ENCODE measurements at regions of chr7 and their contacts with region 1.

Region 1: DNA sequence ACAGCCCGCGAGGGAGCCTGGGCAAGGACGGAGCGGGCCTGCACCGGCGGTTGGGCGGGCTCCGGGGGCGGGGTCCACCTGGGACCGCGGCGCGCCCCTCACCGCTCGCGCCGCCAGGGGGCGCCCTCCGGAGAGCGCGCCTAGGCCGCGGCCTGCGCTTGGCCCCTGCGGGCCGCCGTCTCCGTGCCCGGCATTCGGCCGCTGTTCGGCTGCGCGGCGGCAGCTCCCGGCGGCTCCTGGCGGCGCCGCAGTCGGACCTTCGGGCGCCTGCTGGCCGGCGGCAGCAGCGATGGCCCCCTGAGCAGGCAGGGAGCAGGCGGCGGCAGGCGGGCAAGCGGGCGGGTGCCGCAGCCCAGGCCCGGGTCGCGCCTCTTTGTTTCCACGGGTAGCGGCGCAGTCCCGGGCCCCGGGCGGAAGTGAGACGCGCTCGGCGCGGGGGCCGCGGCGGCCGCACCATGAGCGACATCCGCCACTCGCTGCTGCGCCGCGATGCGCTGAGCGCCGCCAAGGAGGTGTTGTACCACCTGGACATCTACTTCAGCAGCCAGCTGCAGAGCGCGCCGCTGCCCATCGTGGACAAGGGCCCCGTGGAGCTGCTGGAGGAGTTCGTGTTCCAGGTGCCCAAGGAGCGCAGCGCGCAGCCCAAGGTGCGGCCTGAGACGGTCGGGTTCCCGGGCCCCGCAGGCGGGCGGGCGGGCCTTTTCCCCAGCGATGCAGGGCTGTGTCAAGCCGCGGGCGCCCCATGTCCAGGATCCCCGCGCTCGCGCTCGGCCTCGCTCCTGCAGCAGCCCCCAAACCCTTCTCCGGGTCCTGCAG is at the start of gene INTS15:
- DNase-seq: no peak
- H3K4me3 ChIP-seq: peak within 1 kb of the TSS; percentile 91
- H3K27me3 ChIP-seq: no peaks in the 10 kb centered on the region
- CTCF ChIP-seq: 0 out of 2 replicates have a peak, but pooled peaks have one; percentile 10
- polyA plus RNA-seq, gene INTS15: 16.0 and 22.6 TPM in 2 replicates

Region 2: DNA sequence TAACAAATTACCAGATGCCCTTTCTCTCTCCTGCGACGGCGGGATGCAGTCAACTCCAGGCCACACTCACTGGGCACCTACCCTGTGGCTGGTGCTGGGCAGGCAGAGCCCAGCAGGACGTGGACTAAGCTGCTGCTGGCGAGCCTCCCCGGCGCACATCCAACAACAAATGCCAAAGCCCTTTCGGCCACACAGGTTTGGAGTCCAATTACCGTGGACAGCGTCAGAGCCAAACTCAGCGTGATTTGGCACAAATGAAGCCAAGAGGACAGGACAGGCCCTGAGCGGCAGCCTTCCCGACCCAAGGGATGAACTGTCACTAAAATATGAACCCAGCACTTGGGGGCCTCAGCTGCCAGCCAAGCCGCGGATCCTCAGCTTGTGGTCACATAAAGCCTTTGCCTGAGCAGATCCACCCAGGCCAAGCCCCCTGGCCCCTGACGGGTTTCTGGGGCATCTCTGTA is 170.7 kb before region 1 on chr7:
- CTCF ChIA-PET with region 1: no interaction called
- POLR2A ChIA-PET with region 1: no interaction called
- DNase-seq: no peak
- H3K4me3 ChIP-seq: no peak overlapping the region
- H3K27me3 ChIP-seq: no peaks in the 10 kb centered on the region
- CTCF ChIP-seq: no peak

Region 3: DNA sequence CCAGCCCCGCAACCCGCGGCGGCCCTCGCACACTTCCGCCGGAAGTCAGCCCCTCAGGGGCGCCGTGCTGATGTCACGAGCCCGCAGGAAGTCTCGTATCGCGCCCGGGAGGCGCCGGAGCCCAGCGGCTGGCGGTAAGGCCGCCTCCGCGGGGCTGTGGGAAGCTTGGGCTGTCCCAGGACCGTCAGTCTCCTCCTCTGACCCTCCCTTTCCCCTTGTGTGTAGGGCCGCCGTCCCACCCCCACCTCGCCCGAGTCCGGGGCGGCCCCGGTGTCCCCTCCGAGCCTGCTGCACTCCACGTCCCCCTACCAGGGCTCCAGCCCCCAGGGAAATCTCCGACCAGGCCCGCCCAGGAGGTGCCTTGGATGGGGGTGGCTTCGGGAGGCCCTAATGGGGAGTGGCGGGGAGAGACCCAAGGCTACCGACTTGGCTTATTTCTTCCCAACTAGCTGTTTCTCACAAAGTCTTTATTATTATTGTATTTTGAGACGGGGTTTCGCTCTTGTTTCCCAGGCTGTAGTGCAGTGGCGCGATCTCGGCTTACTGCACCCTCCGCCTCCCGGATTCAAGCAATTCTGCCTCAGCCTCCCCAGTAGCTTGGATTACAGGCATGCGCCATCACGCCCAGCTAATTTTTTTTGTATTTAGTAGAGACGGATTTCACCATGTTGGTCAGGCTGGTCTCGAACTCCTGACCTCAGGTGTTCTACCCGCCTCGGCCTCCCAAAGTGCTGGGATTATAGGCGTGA is 12.5 kb before region 1 on chr7 and contains the start of gene ZDHHC4:
- CTCF ChIA-PET with region 1: interaction called, 18 read pairs
- POLR2A ChIA-PET with region 1: no interaction called
- DNase-seq: peak; percentile 22
- H3K4me3 ChIP-seq: peak within 1 kb of the TSS; percentile 73
- H3K27me3 ChIP-seq: no peaks in the 10 kb centered on the region
- CTCF ChIP-seq: no peak
- polyA plus RNA-seq, gene ZDHHC4: 113 and 116 TPM in 2 replicates

Measured in BJ (cell line).